PC-3 (cell line): ENCODE measurements at regions of chr2 and their contacts with region 1.

Region 1: GRCh38 chr2:173884025-173884802 is 81.0 kb downstream of the SP3 start:
- DNase-seq: peak; percentile 78
- ATAC-seq: peak; percentile 91
- H3K4me3 ChIP-seq: no peak overlapping the region
- H3K27ac ChIP-seq: no peak overlapping the region
- H3K4me1 ChIP-seq: peaks cover 6% of the 10 kb centered on the region; the same call in 1 of the 2 replicates
- H3K27me3 ChIP-seq: no peaks in the 10 kb centered on the region
- CTCF ChIP-seq: peak; percentile 83

Region 2: DNA sequence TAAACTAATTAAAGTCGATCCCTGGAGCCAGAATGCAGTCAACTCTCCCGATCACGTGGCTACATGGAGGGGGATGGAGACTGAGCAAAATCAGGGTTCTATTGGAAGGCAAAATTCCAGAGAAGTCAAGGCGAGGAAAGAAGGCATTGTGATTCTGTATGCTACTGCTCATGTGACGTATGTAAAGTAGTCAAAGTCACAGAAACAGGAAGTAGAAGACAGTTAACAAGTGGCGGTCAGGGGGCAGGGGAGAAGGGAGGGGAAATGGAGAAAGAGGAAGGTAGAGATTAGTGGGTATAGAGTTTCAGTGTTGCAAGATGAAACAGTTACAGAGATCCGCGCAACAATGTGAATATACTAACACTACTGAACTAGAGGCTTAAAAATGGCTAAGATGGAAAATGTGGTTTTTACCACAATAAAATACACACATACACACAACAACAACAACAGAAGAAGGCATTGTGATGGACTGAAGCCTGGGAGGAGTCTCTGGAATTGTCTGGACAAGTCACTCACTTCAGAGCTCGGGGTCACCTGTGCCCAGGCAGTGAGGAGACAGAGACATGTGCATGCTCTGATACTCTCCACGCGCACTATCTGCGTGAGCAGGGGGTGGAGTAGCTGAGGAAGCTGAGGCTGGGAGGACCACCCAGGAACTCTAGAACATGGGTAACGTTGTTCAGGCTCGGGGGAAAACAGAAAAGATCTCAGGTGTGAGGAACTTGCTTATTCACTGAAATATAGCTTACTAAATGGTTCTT is 619.4 kb before region 1 on chr2:
- CTCF ChIA-PET with region 1: no interaction called
- POLR2A ChIA-PET with region 1: no interaction called
- intact Hi-C with region 1: no loop called
- DNase-seq: no peak
- ATAC-seq: no peak
- H3K4me3 ChIP-seq: no peak overlapping the region
- H3K27ac ChIP-seq: no peak overlapping the region
- H3K4me1 ChIP-seq: no peaks in the 10 kb centered on the region
- H3K27me3 ChIP-seq: no peaks in the 10 kb centered on the region
- CTCF ChIP-seq: no peak

Region 3: DNA sequence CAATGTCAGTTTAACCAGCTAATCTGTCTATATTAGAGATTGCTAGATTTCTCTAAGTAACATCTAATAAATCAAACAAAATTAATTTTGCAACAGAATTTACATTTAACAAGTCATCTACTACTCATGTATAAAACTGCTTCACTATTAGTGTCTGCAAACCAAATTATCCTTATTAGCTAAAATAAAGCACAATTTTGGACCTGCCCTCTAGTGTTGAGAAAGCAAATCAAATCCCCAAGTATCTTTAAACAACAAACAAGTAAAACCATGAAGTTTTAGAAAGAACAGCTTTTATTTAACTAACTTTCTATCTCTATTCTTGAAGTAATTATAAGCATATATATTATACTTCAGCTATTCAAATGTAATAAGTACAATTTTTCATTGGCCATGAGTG is 194.1 kb after region 1 on chr2:
- CTCF ChIA-PET with region 1: no interaction called
- POLR2A ChIA-PET with region 1: no interaction called
- intact Hi-C with region 1: loop called (anchors 1 kb)
- DNase-seq: peak; percentile 31
- ATAC-seq: no peak
- H3K4me3 ChIP-seq: no peak overlapping the region
- H3K27ac ChIP-seq: no peak overlapping the region
- H3K4me1 ChIP-seq: no peaks in the 10 kb centered on the region
- H3K27me3 ChIP-seq: no peaks in the 10 kb centered on the region
- CTCF ChIP-seq: peak; percentile 75